Stomach (tissue), 19 donors: ENCODE measurements at regions of chr17 and their contacts with region 1.

Region 1: GRCh38 chr17:75319904-75320691 is 30.9 kb upstream of the SLC25A19 start:
- DNase-seq: no peak
- H3K4me3 ChIP-seq: no peak overlapping the region
- H3K27ac ChIP-seq: peak overlapping the region in 3 of 5 donors; percentile 35 to 70 (median 53)
- H3K4me1 ChIP-seq: peaks cover 0 to 47% (median 35%) of the 10 kb centered on the region in 4 donors
- H3K27me3 ChIP-seq: no peaks in the 10 kb centered on the region
- CTCF ChIP-seq: no peak
- EP300 ChIP-seq: no peak
- POLR2A ChIP-seq: no peak

Region 2: GRCh38 chr17:75412455-75413317 is 92.6 kb after region 1 on chr17:
- intact Hi-C with region 1: loop called (anchors 5 kb)
- DNase-seq: peak; percentile 68 to 87
- H3K4me3 ChIP-seq: peak overlapping the region in 2 of 4 donors; percentile 0 to 26
- H3K27ac ChIP-seq: no peak overlapping the region
- H3K4me1 ChIP-seq: peaks cover 0 to 11% (median 6%) of the 10 kb centered on the region in 4 donors
- H3K27me3 ChIP-seq: no peaks in the 10 kb centered on the region
- CTCF ChIP-seq: peak in 5 of 7 experiments; percentile 61 to 92 (median 77)
- EP300 ChIP-seq: no peak
- POLR2A ChIP-seq: no peak